Activated naive CD4-positive, alpha-beta T cell treated with anti-CD3 and anti-CD28 coated beads for 36 hours (primary cell): ENCODE measurements at regions of chr12 and their contacts with region 1.

Region 1: GRCh38 chr12:57520053-57520871 is at the start of gene DDIT3:
- DNase-seq: peak; percentile 100
- H3K4me3 Mint-ChIP-seq: peak within 1 kb of the TSS; percentile 97
- H3K27ac Mint-ChIP-seq: peak within 1 kb of the TSS; percentile 100
- H3K4me1 Mint-ChIP-seq: peaks cover 67% of the 10 kb centered on the region
- H3K27me3 Mint-ChIP-seq: no peaks in the 10 kb centered on the region
- total RNA-seq, gene DDIT3: 44.6 to 45.6 TPM

Region 2: DNA sequence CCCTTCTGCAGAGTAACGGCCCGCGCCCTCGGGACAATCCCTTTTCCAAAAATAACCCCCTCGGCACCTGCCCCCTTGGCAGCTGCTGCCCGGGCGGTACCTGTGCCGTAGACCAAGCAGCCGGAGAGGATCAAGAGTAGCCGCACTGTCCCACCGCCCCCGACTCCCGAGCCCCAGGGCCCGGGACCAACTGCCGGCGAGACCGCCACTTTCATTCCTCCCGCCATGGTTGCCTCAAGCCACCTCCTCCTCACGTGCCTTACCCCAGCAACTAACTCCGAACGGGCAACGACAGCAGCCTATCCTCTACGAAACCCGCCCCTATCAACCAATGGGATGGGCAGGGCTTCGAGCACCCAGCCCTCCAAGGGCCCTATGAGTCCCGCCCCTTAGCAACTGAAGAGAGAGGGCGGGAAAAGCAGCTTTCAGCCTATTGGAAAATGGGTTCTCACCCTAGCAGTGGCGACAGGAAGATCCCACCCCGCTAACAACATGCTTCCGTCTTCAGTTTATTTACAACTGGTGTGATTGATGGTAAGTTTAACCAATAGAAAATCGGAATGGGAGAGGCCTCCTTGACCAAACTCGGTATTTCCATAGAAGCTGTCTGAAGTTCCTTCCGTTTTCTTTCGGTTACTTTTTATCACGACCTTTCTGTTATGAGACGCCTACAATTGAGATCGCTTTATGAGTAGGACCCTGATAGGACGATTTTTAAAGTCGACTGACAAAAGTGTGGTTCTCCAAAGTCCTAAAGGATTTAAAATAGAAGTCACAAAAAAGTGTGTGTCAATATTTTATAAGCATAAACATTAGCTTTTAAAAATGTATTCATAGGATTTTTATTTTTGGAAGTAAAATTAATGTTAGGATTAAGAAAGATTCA is 441.5 kb before region 1 on chr12 and contains the start of gene NEMP1:
- CTCF ChIA-PET with region 1: no interaction called
- intact Hi-C with region 1: loop called (anchors 2 kb)
- DNase-seq: peak; percentile 98
- H3K4me3 Mint-ChIP-seq: peak within 1 kb of the TSS; percentile 99
- H3K27ac Mint-ChIP-seq: peak within 1 kb of the TSS; percentile 98
- H3K4me1 Mint-ChIP-seq: peaks cover 37% of the 10 kb centered on the region
- H3K27me3 Mint-ChIP-seq: no peaks in the 10 kb centered on the region
- total RNA-seq, gene NEMP1: 71.3 to 72.2 TPM

Region 3: DNA sequence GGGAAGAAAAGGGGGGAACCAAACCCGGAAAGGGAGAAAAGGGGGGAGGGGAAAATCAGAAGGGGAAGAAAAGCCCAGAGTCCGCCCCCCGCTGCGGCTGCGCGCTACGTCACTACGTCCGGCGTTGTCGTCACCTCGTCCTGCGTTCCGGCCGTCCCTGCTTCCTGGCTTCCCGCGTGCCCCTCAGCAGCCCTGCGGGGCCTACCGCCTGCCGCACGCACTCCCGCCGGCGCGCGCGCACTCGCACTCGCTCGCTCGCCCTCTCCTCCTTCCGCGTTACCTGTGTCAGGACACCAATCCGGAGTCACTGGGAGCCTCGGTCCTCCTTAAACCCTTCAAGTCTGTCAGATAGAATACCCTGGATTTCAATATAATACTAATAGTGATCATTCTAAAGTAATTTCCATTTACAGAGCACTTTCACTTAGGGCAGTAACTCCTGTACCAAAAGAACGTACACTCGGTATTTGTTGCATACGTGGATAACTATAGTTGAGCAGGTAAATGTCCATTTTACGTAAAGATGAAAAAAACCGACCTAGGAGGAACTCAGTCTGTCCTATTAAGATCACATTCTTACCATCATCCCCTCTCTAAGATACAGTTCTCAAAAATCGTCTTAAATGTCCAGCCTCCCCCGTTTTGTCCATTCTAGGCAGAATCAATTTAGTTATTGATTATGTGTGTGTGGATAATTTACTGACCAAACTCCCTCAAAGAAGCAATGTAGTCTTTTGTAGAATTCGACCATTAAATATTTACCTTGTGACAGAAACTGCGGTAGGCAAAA is 89.1 kb before region 1 on chr12 and contains the start of gene R3HDM2:
- CTCF ChIA-PET with region 1: no interaction called
- intact Hi-C with region 1: loop called (anchors 1 kb)
- DNase-seq: peak; percentile 97
- H3K4me3 Mint-ChIP-seq: peak within 1 kb of the TSS; percentile 94
- H3K27ac Mint-ChIP-seq: peak within 1 kb of the TSS; percentile 98
- H3K4me1 Mint-ChIP-seq: peaks cover 37% of the 10 kb centered on the region
- H3K27me3 Mint-ChIP-seq: no peaks in the 10 kb centered on the region
- total RNA-seq, gene R3HDM2: 42.2 to 44.8 TPM

Region 4: GRCh38 chr12:57546438-57547383 is 26.4 kb after region 1 on chr12 and contains the start of gene DCTN2:
- CTCF ChIA-PET with region 1: interaction called, 4 read pairs
- intact Hi-C with region 1: loop called (anchors 1 kb)
- DNase-seq: peak; percentile 98
- H3K4me3 Mint-ChIP-seq: peak within 1 kb of the TSS; percentile 91
- H3K27ac Mint-ChIP-seq: peak within 1 kb of the TSS; percentile 82
- H3K4me1 Mint-ChIP-seq: peaks cover 47% of the 10 kb centered on the region
- H3K27me3 Mint-ChIP-seq: no peaks in the 10 kb centered on the region
- total RNA-seq, gene DCTN2: 65.1 to 71.7 TPM

Region 5: GRCh38 chr12:57744777-57745484 is 224.7 kb after region 1 on chr12 and contains the start of gene TSPAN31:
- CTCF ChIA-PET with region 1: no interaction called
- intact Hi-C with region 1: loop called (anchors 1 kb)
- DNase-seq: peak; percentile 99
- H3K4me3 Mint-ChIP-seq: peak within 1 kb of the TSS; percentile 85
- H3K27ac Mint-ChIP-seq: peak within 1 kb of the TSS; percentile 94
- H3K4me1 Mint-ChIP-seq: peaks cover 40% of the 10 kb centered on the region
- H3K27me3 Mint-ChIP-seq: no peaks in the 10 kb centered on the region
- total RNA-seq, gene TSPAN31: 6.4 to 7.7 TPM

Region 6: GRCh38 chr12:57935839-57936512 is 415.7 kb after region 1 on chr12:
- CTCF ChIA-PET with region 1: no interaction called
- intact Hi-C with region 1: loop called (anchors 5 kb)
- DNase-seq: peak; percentile 96
- H3K4me3 Mint-ChIP-seq: peak overlapping the region; percentile 96
- H3K27ac Mint-ChIP-seq: peak overlapping the region; percentile 96
- H3K4me1 Mint-ChIP-seq: peaks cover 23% of the 10 kb centered on the region
- H3K27me3 Mint-ChIP-seq: no peaks in the 10 kb centered on the region